T-cell (primary cell): ENCODE measurements at regions of chr1 and their contacts with region 1.

Region 1: GRCh38 chr1:172662464-172663109 is 3.7 kb downstream of the FASLG start:
- DNase-seq: peak; percentile 71 to 91 (median 82)
- ATAC-seq: peak; percentile 82 to 91 (median 89)
- H3K4me3 ChIP-seq: peak overlapping the region in 1 of 2 donors; percentile 52
- H3K4me3 Mint-ChIP-seq: peak overlapping the region; percentile 71 to 76 (median 73)
- H3K27ac ChIP-seq: peak overlapping the region; percentile 62
- H3K27ac Mint-ChIP-seq: peak overlapping the region; percentile 70 to 80
- H3K4me1 ChIP-seq: peaks cover 34 to 43% of the 10 kb centered on the region in 2 experiments
- H3K4me1 Mint-ChIP-seq: peaks cover 65 to 76% (median 66%) of the 10 kb centered on the region in 3 donors
- H3K27me3 ChIP-seq: no peaks in the 10 kb centered on the region
- H3K27me3 Mint-ChIP-seq: no peaks in the 10 kb centered on the region

Region 2: DNA sequence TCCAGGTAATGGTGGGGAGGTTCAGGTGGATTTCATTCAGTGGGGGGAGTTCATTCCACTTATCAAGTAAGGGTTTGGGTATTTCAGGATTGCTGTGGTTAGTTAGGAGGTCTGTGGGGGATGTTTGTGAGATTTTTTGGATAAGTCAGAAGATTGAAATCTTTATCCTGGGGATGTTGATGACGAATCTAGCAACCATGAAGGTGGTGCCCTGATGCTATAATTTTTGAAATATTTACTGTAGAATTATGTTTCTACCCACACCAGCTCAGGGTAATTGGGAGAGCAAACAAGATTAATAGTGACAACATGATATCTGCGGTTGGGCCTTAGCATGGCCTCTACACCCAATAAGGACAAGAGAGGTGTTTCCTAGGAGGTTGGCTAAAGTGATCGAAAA is 101.3 kb before region 1 on chr1:
- CTCF ChIA-PET with region 1: interaction called in 1 of 2 experiments, 12 read pairs
- POLR2A ChIA-PET with region 1: no interaction called
- DNase-seq: no peak
- ATAC-seq: no peak
- H3K4me3 ChIP-seq: no peak overlapping the region
- H3K4me3 Mint-ChIP-seq: no peak overlapping the region
- H3K27ac ChIP-seq: no peak overlapping the region
- H3K27ac Mint-ChIP-seq: no peak overlapping the region
- H3K4me1 ChIP-seq: no peaks in the 10 kb centered on the region
- H3K4me1 Mint-ChIP-seq: peaks cover 4 to 22% (median 10%) of the 10 kb centered on the region in 3 donors
- H3K27me3 ChIP-seq: no peaks in the 10 kb centered on the region
- H3K27me3 Mint-ChIP-seq: no peaks in the 10 kb centered on the region

Region 3: GRCh38 chr1:172609528-172609927 is 53.1 kb before region 1 on chr1:
- CTCF ChIA-PET with region 1: interaction called in 1 of 2 experiments, 10 read pairs
- POLR2A ChIA-PET with region 1: no interaction called
- DNase-seq: peak in 1 of 35 experiments; percentile 60
- ATAC-seq: peak; percentile 58 to 81 (median 70)
- H3K4me3 ChIP-seq: no peak overlapping the region
- H3K4me3 Mint-ChIP-seq: no peak overlapping the region
- H3K27ac ChIP-seq: no peak overlapping the region
- H3K27ac Mint-ChIP-seq: no peak overlapping the region
- H3K4me1 ChIP-seq: no peaks in the 10 kb centered on the region
- H3K4me1 Mint-ChIP-seq: peaks cover 8 to 18% (median 8%) of the 10 kb centered on the region in 3 donors
- H3K27me3 ChIP-seq: no peaks in the 10 kb centered on the region
- H3K27me3 Mint-ChIP-seq: no peaks in the 10 kb centered on the region

Region 4: GRCh38 chr1:172686143-172686542 is 23.6 kb after region 1 on chr1:
- CTCF ChIA-PET with region 1: no interaction called
- POLR2A ChIA-PET with region 1: no interaction called
- DNase-seq: no peak
- ATAC-seq: no peak
- H3K4me3 ChIP-seq: no peak overlapping the region
- H3K4me3 Mint-ChIP-seq: no peak overlapping the region
- H3K27ac ChIP-seq: no peak overlapping the region
- H3K27ac Mint-ChIP-seq: no peak overlapping the region
- H3K4me1 ChIP-seq: peaks cover 0 to 9% of the 10 kb centered on the region in 2 experiments
- H3K4me1 Mint-ChIP-seq: peaks cover 5 to 24% (median 15%) of the 10 kb centered on the region in 3 donors
- H3K27me3 ChIP-seq: no peaks in the 10 kb centered on the region
- H3K27me3 Mint-ChIP-seq: peaks cover 0 to 4% of the 10 kb centered on the region in 2 donors